ENCODE measurements at regions of chr9 and their contacts with region 1.

Region 1: DNA sequence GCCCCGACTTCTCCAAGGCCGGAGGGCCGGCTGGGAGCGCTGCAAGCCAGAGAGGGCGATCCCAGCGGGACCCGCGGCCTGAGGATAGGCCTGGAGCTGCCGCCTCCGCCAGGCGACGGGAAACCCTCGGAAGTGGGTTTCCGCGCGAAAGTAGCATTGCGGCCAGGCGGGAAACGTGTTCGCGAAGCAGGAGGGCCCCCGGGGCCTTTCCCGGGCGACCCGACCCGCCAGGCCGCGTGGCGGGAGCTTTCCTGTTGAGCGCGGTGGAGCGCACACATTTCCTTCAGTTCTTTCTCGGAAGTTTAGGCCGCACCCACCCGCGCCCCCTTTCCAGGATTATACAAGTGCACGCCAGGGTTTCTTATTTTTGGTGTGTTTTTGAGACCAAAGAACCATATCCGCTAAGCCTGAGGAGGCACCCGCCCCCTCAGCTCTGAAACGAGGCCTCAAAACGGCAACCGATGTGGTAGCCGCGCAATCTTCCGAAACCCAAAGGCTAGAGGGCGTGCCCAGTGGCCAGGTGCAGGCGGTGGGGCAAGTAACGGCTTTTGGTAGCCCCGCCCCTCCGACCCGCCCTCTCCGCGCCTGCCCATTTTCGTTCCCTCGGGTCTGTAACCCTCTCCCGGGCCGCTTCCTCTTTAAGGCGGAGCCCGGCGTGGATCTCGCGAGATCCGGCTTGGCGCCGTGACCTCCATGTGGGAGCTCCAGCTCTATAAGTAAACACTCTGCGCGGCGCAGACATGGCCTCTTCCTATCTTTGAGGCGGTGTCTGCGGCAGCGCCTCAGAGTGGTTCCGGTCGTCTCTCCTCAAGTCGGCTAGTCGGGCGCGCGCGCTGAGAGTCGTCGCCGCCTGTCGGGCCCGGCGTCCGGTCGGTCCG is at the start of gene UHRF2:
- DNase-seq: peak; percentile 96 to 99 (median 98)
- H3K4me3 ChIP-seq: peak within 1 kb of the TSS; percentile 77 to 91
- H3K4me3 Mint-ChIP-seq: peak within 1 kb of the TSS; percentile 88 to 94 (median 92)
- H3K27ac ChIP-seq: peak within 1 kb of the TSS; percentile 72
- H3K27ac Mint-ChIP-seq: peak within 1 kb of the TSS; percentile 94 to 98 (median 96)
- H3K4me1 ChIP-seq: peaks cover 42% of the 10 kb centered on the region
- H3K4me1 Mint-ChIP-seq: peaks cover 28 to 45% (median 35%) of the 10 kb centered on the region in 4 donors
- H3K27me3 ChIP-seq: no peaks in the 10 kb centered on the region
- H3K27me3 Mint-ChIP-seq: peaks cover 0 to 1% of the 10 kb centered on the region in 2 donors
- total RNA-seq, gene UHRF2: 124 to 128 TPM

Region 2: GRCh38 chr9:5437254-5438216 is 975.2 kb before region 1 on chr9 and contains the start of gene PLGRKT:
- CTCF ChIA-PET with region 1: interaction called, 4 read pairs
- POLR2A ChIA-PET with region 1: no interaction called
- intact Hi-C with region 1: loop called (anchors 10 kb)
- DNase-seq: peak; percentile 89 to 95 (median 91)
- H3K4me3 ChIP-seq: peak within 1 kb of the TSS; percentile 71 to 83
- H3K4me3 Mint-ChIP-seq: peak within 1 kb of the TSS; percentile 91 to 98 (median 94)
- H3K27ac ChIP-seq: peak within 1 kb of the TSS; percentile 92
- H3K27ac Mint-ChIP-seq: peak within 1 kb of the TSS; percentile 99 to 100 (median 99)
- H3K4me1 ChIP-seq: peaks cover 23% of the 10 kb centered on the region
- H3K4me1 Mint-ChIP-seq: peaks cover 25 to 46% (median 36%) of the 10 kb centered on the region in 4 donors
- H3K27me3 ChIP-seq: no peaks in the 10 kb centered on the region
- H3K27me3 Mint-ChIP-seq: no peaks in the 10 kb centered on the region
- total RNA-seq, gene PLGRKT: 20.0 to 21.7 TPM

Region 3: DNA sequence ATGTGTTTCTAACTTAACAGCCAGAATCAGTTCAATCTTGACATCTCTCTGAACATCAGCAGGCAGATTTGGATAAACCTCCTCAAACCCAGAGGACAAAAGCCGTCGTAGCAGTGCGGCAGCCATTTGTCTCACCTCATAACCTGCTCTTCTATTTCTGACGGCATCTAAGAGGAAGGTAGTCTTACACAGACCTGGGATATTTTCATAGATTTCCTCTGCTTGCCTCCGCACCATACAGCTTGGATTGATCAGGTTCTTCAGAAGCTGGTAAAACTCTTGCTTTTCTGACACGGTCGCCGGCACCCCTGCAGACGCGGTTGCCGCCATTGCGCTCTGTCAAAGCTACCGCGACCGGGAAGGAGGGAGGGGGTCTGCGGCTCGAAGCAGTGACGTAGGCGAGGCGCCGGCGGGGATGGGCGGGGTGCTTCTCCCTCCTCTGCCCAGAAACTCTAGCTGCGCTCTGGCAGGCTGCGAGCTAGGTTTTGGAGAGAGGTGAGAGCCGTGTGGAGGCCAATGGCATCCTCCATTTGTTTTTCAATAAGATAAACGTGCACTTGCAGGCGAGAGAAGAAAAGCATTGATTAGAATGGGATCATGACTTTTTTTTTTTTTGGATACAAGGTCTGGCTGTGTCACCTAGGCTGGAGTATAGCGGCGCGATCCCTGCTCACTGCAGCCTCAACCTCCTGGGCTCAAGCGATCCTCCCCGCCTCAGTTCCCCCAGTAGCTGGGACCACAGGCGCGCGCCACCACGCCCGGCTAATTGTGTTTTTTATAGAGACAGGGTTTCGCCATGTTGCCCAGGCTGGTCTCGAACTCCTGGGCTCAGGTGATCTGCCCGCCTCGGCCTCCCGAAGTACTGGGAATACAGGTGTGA is 397.2 kb before region 1 on chr9 and contains the start of gene RANBP6:
- CTCF ChIA-PET with region 1: no interaction called
- POLR2A ChIA-PET with region 1: interaction called, 13 read pairs
- intact Hi-C with region 1: no loop called
- DNase-seq: peak; percentile 89 to 92 (median 90)
- H3K4me3 ChIP-seq: peak within 1 kb of the TSS; percentile 67 to 95
- H3K4me3 Mint-ChIP-seq: peak within 1 kb of the TSS; percentile 96 to 99 (median 97)
- H3K27ac ChIP-seq: peak within 1 kb of the TSS; percentile 70
- H3K27ac Mint-ChIP-seq: peak within 1 kb of the TSS; percentile 93 to 99 (median 98)
- H3K4me1 ChIP-seq: peaks cover 22% of the 10 kb centered on the region
- H3K4me1 Mint-ChIP-seq: peaks cover 23 to 47% (median 33%) of the 10 kb centered on the region in 4 donors
- H3K27me3 ChIP-seq: no peaks in the 10 kb centered on the region
- H3K27me3 Mint-ChIP-seq: no peaks in the 10 kb centered on the region
- total RNA-seq, gene RANBP6: 36.0 to 36.7 TPM

Region 4: DNA sequence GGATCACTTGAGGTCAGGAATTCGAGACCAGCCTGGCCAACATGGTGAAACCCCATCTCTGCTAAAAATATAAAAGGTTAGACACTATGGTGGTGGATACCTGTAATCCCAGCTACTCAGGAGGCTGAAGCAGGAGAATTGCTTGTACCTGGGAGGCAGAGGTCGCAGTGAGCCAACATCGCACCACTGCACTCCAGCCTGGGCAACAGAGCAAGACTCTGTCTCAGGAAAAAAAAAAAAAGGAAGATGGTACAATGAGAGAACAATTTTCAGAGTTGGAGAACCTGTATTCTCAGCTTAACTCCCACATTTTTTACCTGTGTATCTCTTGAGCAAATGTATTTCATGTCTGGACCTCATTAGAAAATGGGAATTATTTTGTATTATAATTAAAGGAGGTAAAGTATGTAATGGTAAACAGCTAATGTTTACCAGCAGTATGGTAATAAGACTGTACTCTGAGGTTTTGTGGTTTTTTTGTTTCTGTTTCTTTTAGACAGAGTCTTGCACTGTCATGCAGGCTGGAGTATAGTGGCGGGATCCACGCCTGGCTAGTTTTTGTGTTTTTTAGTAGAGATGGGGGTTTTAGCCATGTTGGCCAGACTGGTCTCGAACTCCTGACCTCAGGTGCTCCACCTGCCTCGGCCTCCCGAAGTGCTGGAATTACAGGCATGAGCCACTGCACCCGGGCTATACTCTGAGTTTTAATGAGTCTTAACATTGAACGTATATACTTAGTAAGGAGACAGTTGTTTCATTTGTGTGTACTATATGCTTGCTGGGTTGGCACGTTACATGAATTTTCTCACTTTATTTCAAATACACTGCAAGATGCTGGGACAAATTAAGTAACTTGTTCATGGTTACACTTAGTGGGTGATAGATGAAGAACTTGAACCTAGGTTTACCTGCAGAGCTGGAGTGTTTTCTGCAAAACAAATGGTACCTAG is 16.5 kb after region 1 on chr9:
- CTCF ChIA-PET with region 1: interaction called, 9 read pairs
- POLR2A ChIA-PET with region 1: interaction called, 166 read pairs
- intact Hi-C with region 1: loop called (anchors 2 kb)
- DNase-seq: peak in 4 of 5 donors; percentile 31 to 46 (median 40)
- H3K4me3 ChIP-seq: no peak overlapping the region
- H3K4me3 Mint-ChIP-seq: peak overlapping the region; percentile 60 to 84 (median 79)
- H3K27ac ChIP-seq: peak overlapping the region; percentile 30
- H3K27ac Mint-ChIP-seq: peak overlapping the region; percentile 65 to 88 (median 76)
- H3K4me1 ChIP-seq: peaks cover 95% of the 10 kb centered on the region
- H3K4me1 Mint-ChIP-seq: peaks cover 57 to 92% (median 74%) of the 10 kb centered on the region in 4 donors
- H3K27me3 ChIP-seq: no peaks in the 10 kb centered on the region
- H3K27me3 Mint-ChIP-seq: no peaks in the 10 kb centered on the region

Region 5: DNA sequence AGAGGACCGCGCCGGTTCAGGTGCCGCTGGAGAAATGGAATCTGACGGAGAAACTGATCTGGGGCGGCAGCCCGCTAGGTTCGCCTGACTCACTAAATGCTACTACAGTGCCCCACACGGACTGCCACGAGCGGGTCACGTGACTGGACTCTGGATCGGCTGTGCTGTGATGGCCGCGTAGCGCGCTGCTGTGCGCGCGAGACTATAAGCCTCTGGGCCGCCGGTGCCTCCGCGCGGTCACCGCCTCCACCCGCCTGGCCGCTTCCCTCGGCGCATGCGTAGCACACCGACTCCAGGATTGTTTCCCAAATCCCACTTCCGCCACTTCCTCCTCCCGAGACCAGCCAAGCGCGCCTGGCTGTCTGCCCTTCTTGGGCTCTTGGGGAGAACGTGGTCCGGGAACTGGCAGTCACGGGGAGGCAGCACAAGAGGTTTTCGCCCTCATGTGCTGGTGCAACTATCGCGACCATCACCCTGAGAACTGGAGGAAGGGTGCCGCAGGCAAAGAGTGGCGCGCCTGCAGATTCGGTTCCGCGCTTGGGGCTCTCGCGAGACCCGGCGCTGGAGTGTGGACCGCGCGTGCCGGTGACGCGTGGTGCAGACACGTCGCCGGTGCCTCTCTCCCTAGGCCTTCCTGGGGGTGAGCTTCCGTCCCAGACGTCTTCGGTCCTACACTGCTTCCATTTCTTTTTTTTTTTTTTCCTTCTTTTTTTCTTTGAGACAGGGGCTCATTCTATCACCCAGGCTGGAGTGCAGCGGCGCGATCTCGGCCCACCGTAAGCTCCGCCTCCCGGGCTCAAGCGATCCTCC is 268.6 kb after region 1 on chr9:
- CTCF ChIA-PET with region 1: interaction called, 6 read pairs
- POLR2A ChIA-PET with region 1: interaction called, 41 read pairs
- intact Hi-C with region 1: loop called (anchors 1 kb)
- DNase-seq: peak; percentile 92 to 96 (median 94)
- H3K4me3 ChIP-seq: peak overlapping the region; percentile 91 to 99
- H3K4me3 Mint-ChIP-seq: peak overlapping the region; percentile 93 to 97 (median 95)
- H3K27ac ChIP-seq: peak overlapping the region; percentile 82
- H3K27ac Mint-ChIP-seq: peak overlapping the region; percentile 94 to 100 (median 99)
- H3K4me1 ChIP-seq: peaks cover 23% of the 10 kb centered on the region
- H3K4me1 Mint-ChIP-seq: peaks cover 14 to 34% (median 22%) of the 10 kb centered on the region in 4 donors
- H3K27me3 ChIP-seq: no peaks in the 10 kb centered on the region
- H3K27me3 Mint-ChIP-seq: no peaks in the 10 kb centered on the region

Region 6: GRCh38 chr9:6757456-6758247 is 344.9 kb after region 1 on chr9 and contains the start of gene KDM4C:
- CTCF ChIA-PET with region 1: no interaction called
- POLR2A ChIA-PET with region 1: interaction called, 79 read pairs
- intact Hi-C with region 1: loop called (anchors 1 kb)
- DNase-seq: peak; percentile 94 to 96 (median 94)
- H3K4me3 ChIP-seq: peak within 1 kb of the TSS; percentile 66 to 82
- H3K4me3 Mint-ChIP-seq: peak within 1 kb of the TSS; percentile 95 to 99 (median 98)
- H3K27ac ChIP-seq: peak within 1 kb of the TSS; percentile 92
- H3K27ac Mint-ChIP-seq: peak within 1 kb of the TSS; percentile 97 to 100 (median 100)
- H3K4me1 ChIP-seq: peaks cover 22% of the 10 kb centered on the region
- H3K4me1 Mint-ChIP-seq: peaks cover 21 to 51% (median 31%) of the 10 kb centered on the region in 4 donors
- H3K27me3 ChIP-seq: no peaks in the 10 kb centered on the region
- H3K27me3 Mint-ChIP-seq: no peaks in the 10 kb centered on the region
- total RNA-seq, gene KDM4C: 80.5 to 90.7 TPM